ENCODE measurements at regions of chr2 and their contacts with region 1.

Region 1: GRCh38 chr2:223113161-223113560 is 61.2 kb downstream of the KCNE4 start:
- DNase-seq: no peak
- ATAC-seq: no peak
- H3K4me3 ChIP-seq: no peak overlapping the region
- H3K27ac ChIP-seq: no peak overlapping the region
- H3K4me1 ChIP-seq: no peaks in the 10 kb centered on the region
- H3K27me3 ChIP-seq: no peaks in the 10 kb centered on the region
- CTCF ChIP-seq: no peak

Region 2: DNA sequence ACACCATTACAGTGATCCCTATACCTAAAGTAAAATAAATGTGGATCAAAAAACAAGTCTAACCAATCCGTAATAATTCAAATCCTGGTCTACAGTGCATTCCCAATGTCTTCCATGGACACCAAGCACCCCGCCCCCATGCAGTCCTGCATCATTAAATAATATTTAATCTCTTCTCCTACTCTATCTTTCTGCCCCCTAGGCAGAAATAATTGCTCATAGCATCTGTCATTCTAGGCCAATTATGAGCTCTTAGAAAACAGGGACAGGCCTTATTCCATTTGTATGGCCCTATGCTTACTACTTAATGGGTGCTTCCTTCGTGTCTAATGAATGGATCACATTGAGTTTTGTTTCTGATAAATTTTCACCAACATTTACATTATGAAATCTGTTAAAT is 880.8 kb before region 1 on chr2:
- intact Hi-C with region 1: no loop called
- DNase-seq: no peak
- ATAC-seq: no peak
- H3K4me3 ChIP-seq: no peak overlapping the region
- H3K27ac ChIP-seq: no peak overlapping the region
- H3K4me1 ChIP-seq: no peaks in the 10 kb centered on the region
- H3K27me3 ChIP-seq: peaks cover 0 to 21% (median 10%) of the 10 kb centered on the region in 7 donors
- CTCF ChIP-seq: no peak

Region 3: GRCh38 chr2:222698276-222698675 is 414.9 kb before region 1 on chr2:
- intact Hi-C with region 1: loop called in 1 of 10 experiments (anchors 5 kb)
- DNase-seq: no peak
- ATAC-seq: no peak
- H3K4me3 ChIP-seq: no peak overlapping the region
- H3K27ac ChIP-seq: no peak overlapping the region
- H3K4me1 ChIP-seq: peaks cover 0 to 3% (median 0%) of the 10 kb centered on the region in 9 donors
- H3K27me3 ChIP-seq: peaks cover 0 to 3% (median 0%) of the 10 kb centered on the region in 7 donors
- CTCF ChIP-seq: no peak